B cell (primary cell): ENCODE measurements at regions of chr1 and their contacts with region 1.

Region 1: GRCh38 chr1:171781176-171781875 is at the start of gene METTL13:
- DNase-seq: peak; percentile 99
- ATAC-seq: peak; percentile 91
- H3K4me3 ChIP-seq: peak within 1 kb of the TSS; percentile 82 to 100 (median 89)
- H3K4me3 Mint-ChIP-seq: peak within 1 kb of the TSS; percentile 96
- H3K27ac ChIP-seq: peak within 1 kb of the TSS; percentile 71 to 81
- H3K27ac Mint-ChIP-seq: peak within 1 kb of the TSS; percentile 94
- H3K4me1 ChIP-seq: peaks cover 26 to 32% of the 10 kb centered on the region in 2 donors
- H3K4me1 Mint-ChIP-seq: peaks cover 44% of the 10 kb centered on the region
- H3K27me3 ChIP-seq: no peaks in the 10 kb centered on the region
- H3K27me3 Mint-ChIP-seq: peaks cover 8% of the 10 kb centered on the region
- CTCF ChIP-seq: no peak
- total RNA-seq, gene METTL13: 33.0 and 35.4 TPM in 2 replicates

Region 2: GRCh38 chr1:171741872-171742576 is 39.3 kb before region 1 on chr1 and contains the start of gene VAMP4:
- CTCF ChIA-PET with region 1: interaction called, 3 read pairs
- POLR2A ChIA-PET with region 1: interaction called, 29 read pairs
- intact Hi-C with region 1: loop called (anchors 1 kb)
- DNase-seq: peak; percentile 92
- ATAC-seq: peak; percentile 90
- H3K4me3 ChIP-seq: peak within 1 kb of the TSS; percentile 69 to 95 (median 93)
- H3K4me3 Mint-ChIP-seq: peak within 1 kb of the TSS; percentile 100
- H3K27ac ChIP-seq: peak within 1 kb of the TSS; percentile 91
- H3K27ac Mint-ChIP-seq: peak within 1 kb of the TSS; percentile 100
- H3K4me1 ChIP-seq: peaks cover 20 to 23% of the 10 kb centered on the region in 2 donors
- H3K4me1 Mint-ChIP-seq: peaks cover 40% of the 10 kb centered on the region
- H3K27me3 ChIP-seq: no peaks in the 10 kb centered on the region
- H3K27me3 Mint-ChIP-seq: no peaks in the 10 kb centered on the region
- CTCF ChIP-seq: no peak
- total RNA-seq, gene VAMP4: 17.5 and 21.8 TPM in 2 replicates

Region 3: DNA sequence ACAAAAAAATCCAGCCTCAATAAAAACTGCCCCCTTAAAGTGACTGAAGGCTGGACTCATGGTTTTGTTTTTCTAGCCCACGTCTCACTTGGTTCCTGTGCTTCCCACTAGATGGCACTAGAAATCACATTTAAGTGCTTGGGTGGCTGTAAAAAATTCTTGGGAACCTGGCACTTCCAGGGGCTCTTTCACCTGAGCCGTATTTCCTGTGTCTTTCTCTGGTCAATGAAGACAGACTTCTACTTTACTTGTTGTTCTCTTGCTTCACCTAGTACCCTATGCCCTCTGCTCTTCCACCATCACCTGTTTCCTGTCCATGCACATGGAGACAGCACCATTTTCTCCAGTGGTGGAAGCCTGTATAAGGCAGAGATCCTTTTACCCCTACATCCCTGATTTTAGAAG is 20.2 kb after region 1 on chr1:
- CTCF ChIA-PET with region 1: interaction called, 12 read pairs
- POLR2A ChIA-PET with region 1: interaction called, 4 read pairs
- intact Hi-C with region 1: no loop called
- DNase-seq: peak; percentile 38
- ATAC-seq: peak; percentile 51
- H3K4me3 ChIP-seq: no peak overlapping the region
- H3K4me3 Mint-ChIP-seq: no peak overlapping the region
- H3K27ac ChIP-seq: no peak overlapping the region
- H3K27ac Mint-ChIP-seq: no peak overlapping the region
- H3K4me1 ChIP-seq: peaks cover 7 to 11% of the 10 kb centered on the region in 2 donors
- H3K4me1 Mint-ChIP-seq: peaks cover 15% of the 10 kb centered on the region
- H3K27me3 ChIP-seq: no peaks in the 10 kb centered on the region
- H3K27me3 Mint-ChIP-seq: no peaks in the 10 kb centered on the region
- CTCF ChIP-seq: peak; percentile 82

Region 4: GRCh38 chr1:171841050-171841940 is 60.0 kb after region 1 on chr1 and contains the start of gene DNM3:
- CTCF ChIA-PET with region 1: interaction called, 3 read pairs
- POLR2A ChIA-PET with region 1: no interaction called
- intact Hi-C with region 1: loop called (anchors 1 kb)
- DNase-seq: peak; percentile 88
- ATAC-seq: peak; percentile 93
- H3K4me3 ChIP-seq: peak within 1 kb of the TSS; percentile 50 to 86 (median 73)
- H3K4me3 Mint-ChIP-seq: peak within 1 kb of the TSS; percentile 86
- H3K27ac ChIP-seq: no peak within 1 kb of the TSS
- H3K27ac Mint-ChIP-seq: peak within 1 kb of the TSS; percentile 72
- H3K4me1 ChIP-seq: peaks cover 11 to 21% of the 10 kb centered on the region in 2 donors
- H3K4me1 Mint-ChIP-seq: peaks cover 17% of the 10 kb centered on the region
- H3K27me3 ChIP-seq: peaks cover 0 to 25% (median 17%) of the 10 kb centered on the region in 4 experiments
- H3K27me3 Mint-ChIP-seq: peaks cover 23% of the 10 kb centered on the region
- CTCF ChIP-seq: no peak
- total RNA-seq, gene DNM3: 1.3 and 1.5 TPM in 2 replicates

Region 5: GRCh38 chr1:171852272-171852671 is 70.9 kb after region 1 on chr1:
- CTCF ChIA-PET with region 1: no interaction called
- POLR2A ChIA-PET with region 1: no interaction called
- intact Hi-C with region 1: no loop called
- DNase-seq: no peak
- ATAC-seq: no peak
- H3K4me3 ChIP-seq: no peak overlapping the region
- H3K4me3 Mint-ChIP-seq: no peak overlapping the region
- H3K27ac ChIP-seq: no peak overlapping the region
- H3K27ac Mint-ChIP-seq: no peak overlapping the region
- H3K4me1 ChIP-seq: no peaks in the 10 kb centered on the region
- H3K4me1 Mint-ChIP-seq: no peaks in the 10 kb centered on the region
- H3K27me3 ChIP-seq: no peaks in the 10 kb centered on the region
- H3K27me3 Mint-ChIP-seq: peaks cover 18% of the 10 kb centered on the region
- CTCF ChIP-seq: no peak

Region 6: GRCh38 chr1:171929121-171929520 is 147.8 kb after region 1 on chr1:
- CTCF ChIA-PET with region 1: no interaction called
- POLR2A ChIA-PET with region 1: no interaction called
- intact Hi-C with region 1: no loop called
- DNase-seq: no peak
- ATAC-seq: no peak
- H3K4me3 ChIP-seq: no peak overlapping the region
- H3K4me3 Mint-ChIP-seq: no peak overlapping the region
- H3K27ac ChIP-seq: no peak overlapping the region
- H3K27ac Mint-ChIP-seq: no peak overlapping the region
- H3K4me1 ChIP-seq: no peaks in the 10 kb centered on the region
- H3K4me1 Mint-ChIP-seq: no peaks in the 10 kb centered on the region
- H3K27me3 ChIP-seq: no peaks in the 10 kb centered on the region
- H3K27me3 Mint-ChIP-seq: peaks cover 7% of the 10 kb centered on the region
- CTCF ChIP-seq: no peak